HepG2 (cell line): ENCODE measurements at regions of chr2 and their contacts with region 1.

Region 1: GRCh38 chr2:23926750-23927571 is at the start of gene ATAD2B:
- DNase-seq: peak; percentile 90
- ATAC-seq: peak; percentile 90
- H3K4me3 ChIP-seq: peak within 1 kb of the TSS; percentile 90 to 98 (median 95)
- H3K27ac ChIP-seq: peak within 1 kb of the TSS; percentile 94
- H3K4me1 ChIP-seq: peaks cover 46% of the 10 kb centered on the region
- H3K27me3 ChIP-seq: no peaks in the 10 kb centered on the region; a peak in 1 of 5 replicates
- CTCF ChIP-seq: peak; percentile 95
- EP300 ChIP-seq: 0 out of 4 replicates have a peak, but pooled peaks of 1 of the 2 experiments have one; percentile 23
- POLR2A ChIP-seq: peak; percentile 96 to 97
- RAD21 ChIP-seq: peak; percentile 99
- total RNA-seq, gene ATAD2B: 22.2 and 22.4 TPM in 2 replicates

Region 2: DNA sequence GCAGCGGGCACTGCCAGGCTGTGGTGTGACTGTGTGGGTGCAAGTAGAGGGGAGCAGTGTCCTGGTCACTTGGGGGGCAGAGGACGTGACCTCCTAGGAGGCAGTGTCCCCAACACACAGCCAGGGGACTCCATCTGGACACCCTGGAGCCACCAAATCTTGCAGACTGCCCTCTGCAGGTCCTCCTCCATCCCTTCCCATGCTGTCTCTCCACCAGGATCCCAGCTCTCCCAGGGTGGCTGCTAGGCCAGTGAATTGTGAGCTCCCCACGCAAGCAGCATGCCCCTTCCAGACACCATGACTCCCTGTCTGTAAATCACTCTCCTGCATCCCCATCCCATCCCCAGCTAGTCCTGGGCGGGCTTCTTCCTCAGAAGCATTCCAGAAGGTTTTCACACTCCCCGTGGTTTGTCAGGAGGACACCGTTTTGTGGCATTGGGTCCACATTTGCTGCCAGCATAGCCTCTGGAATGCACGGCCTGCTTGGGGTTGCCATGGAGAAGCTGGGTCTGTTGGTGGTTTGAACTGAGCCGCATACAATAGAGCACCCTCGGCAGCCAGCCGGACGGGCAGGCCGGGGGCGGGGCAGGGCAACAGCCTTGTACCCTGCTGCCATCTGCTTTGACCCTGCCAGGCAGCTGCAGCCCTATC is 331.2 kb before region 1 on chr2:
- CTCF ChIA-PET with region 1: no interaction called
- POLR2A ChIA-PET with region 1: no interaction called
- in situ Hi-C with region 1: no loop called
- intact Hi-C with region 1: no loop called
- DNase-seq: peak; percentile 45
- ATAC-seq: peak; percentile 58
- H3K4me3 ChIP-seq: no peak overlapping the region
- H3K27ac ChIP-seq: no peak overlapping the region
- H3K4me1 ChIP-seq: no peaks in the 10 kb centered on the region
- H3K27me3 ChIP-seq: peaks cover 7 to 70% of the 10 kb centered on the region in 2 experiments; a peak in 4 of 5 replicates
- CTCF ChIP-seq: no peak
- EP300 ChIP-seq: no peak
- POLR2A ChIP-seq: no peak
- RAD21 ChIP-seq: no peak

Region 3: DNA sequence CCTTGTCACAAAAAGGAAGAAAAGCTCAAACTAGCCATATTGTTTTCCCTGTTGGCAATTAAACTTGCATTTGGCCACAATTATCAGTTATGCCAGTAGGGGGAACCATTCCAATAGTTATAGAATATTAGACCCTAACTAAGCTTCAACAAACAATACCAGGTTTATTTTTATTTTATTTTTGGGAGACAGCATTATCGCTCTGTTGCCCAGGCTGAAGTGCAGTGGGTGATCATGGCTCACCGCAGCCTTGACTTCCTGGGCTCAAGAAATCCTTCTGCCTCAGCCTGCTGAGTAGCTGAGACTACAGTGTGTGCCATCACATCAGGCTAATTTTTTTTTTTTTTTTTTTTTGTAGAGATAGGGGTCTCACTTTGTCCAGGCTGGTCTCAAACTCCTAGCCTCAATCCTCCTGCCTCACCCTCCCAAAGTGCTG is 102.2 kb before region 1 on chr2:
- CTCF ChIA-PET with region 1: no interaction called
- POLR2A ChIA-PET with region 1: interaction called, 12 read pairs
- in situ Hi-C with region 1: no loop called
- intact Hi-C with region 1: loop called (anchors 10 kb)
- DNase-seq: peak; percentile 51
- ATAC-seq: peak; percentile 78
- H3K4me3 ChIP-seq: no peak overlapping the region
- H3K27ac ChIP-seq: no peak overlapping the region
- H3K4me1 ChIP-seq: peaks cover 8% of the 10 kb centered on the region
- H3K27me3 ChIP-seq: no peaks in the 10 kb centered on the region
- CTCF ChIP-seq: peak; percentile 77
- EP300 ChIP-seq: no peak
- POLR2A ChIP-seq: no peak
- RAD21 ChIP-seq: peak; percentile 47; the same call in 1 of the 2 replicates

Region 4: GRCh38 chr2:23859983-23860382 is 67.0 kb before region 1 on chr2:
- CTCF ChIA-PET with region 1: no interaction called
- POLR2A ChIA-PET with region 1: no interaction called
- in situ Hi-C with region 1: no loop called
- intact Hi-C with region 1: no loop called
- DNase-seq: no peak
- ATAC-seq: no peak
- H3K4me3 ChIP-seq: no peak overlapping the region
- H3K27ac ChIP-seq: no peak overlapping the region
- H3K4me1 ChIP-seq: no peaks in the 10 kb centered on the region
- H3K27me3 ChIP-seq: no peaks in the 10 kb centered on the region
- CTCF ChIP-seq: no peak
- EP300 ChIP-seq: no peak
- POLR2A ChIP-seq: no peak
- RAD21 ChIP-seq: no peak

Region 5: GRCh38 chr2:23939987-23940717 is 13.2 kb after region 1 on chr2 and contains the start of gene UBXN2A:
- CTCF ChIA-PET with region 1: no interaction called
- POLR2A ChIA-PET with region 1: interaction called, 135 read pairs
- in situ Hi-C with region 1: no loop called
- intact Hi-C with region 1: loop called (anchors 1 kb)
- DNase-seq: peak; percentile 69
- ATAC-seq: peak; percentile 80
- H3K4me3 ChIP-seq: peak within 1 kb of the TSS; percentile 87 to 96 (median 93)
- H3K27ac ChIP-seq: peak within 1 kb of the TSS; percentile 87
- H3K4me1 ChIP-seq: peaks cover 46% of the 10 kb centered on the region
- H3K27me3 ChIP-seq: peaks cover 0 to 3% of the 10 kb centered on the region in 2 experiments; a peak in 1 of 5 replicates
- CTCF ChIP-seq: no peak
- EP300 ChIP-seq: no peak
- POLR2A ChIP-seq: peak; percentile 81 to 84
- RAD21 ChIP-seq: peak; percentile 76
- total RNA-seq, gene UBXN2A: 20.9 and 29.6 TPM in 2 replicates

Region 6: DNA sequence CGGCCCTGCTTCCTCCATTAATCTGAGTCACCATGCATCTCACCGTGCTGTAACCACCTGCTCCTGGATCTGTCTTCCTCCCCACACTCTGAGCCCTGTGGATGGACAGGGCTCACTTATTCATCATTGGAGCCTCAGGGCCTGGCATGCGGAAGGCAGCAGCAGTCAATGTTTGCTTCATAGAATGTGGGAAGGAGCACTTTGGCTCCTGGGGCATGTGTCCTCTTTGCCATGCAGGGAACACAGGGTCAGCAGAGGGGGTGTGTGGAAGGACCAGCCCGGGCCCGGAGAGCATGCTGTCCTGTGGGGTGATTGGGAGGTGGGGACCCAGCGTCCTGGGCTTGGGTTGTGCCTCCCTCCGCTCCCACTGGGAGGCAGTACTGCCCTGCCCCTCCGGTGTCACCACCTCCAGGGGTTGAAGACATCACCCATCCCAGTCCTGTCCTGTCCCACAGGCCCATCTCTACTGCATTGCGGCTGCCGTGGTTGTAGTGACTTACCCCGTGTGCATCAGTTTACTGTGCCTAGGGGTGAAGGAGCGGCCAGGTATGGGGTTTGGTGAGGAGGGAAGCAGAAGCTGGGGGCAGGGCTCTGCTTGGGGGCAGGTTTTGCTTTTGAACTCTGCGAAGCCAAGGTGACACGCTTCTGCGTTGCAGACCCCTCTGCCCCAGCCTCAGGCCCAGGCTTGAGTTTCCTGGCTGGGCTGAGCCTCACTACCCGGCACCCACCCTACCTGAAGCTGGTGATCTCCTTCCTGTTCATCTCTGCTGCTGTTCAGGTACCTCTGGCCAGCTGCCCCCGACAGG is 94.4 kb after region 1 on chr2:
- CTCF ChIA-PET with region 1: interaction called, 3 read pairs
- POLR2A ChIA-PET with region 1: interaction called, 62 read pairs
- in situ Hi-C with region 1: no loop called
- intact Hi-C with region 1: loop called (anchors 1 kb)
- DNase-seq: peak; percentile 61
- ATAC-seq: peak; percentile 84
- H3K4me3 ChIP-seq: no peak overlapping the region
- H3K27ac ChIP-seq: peak overlapping the region; percentile 41
- H3K4me1 ChIP-seq: peaks cover 43% of the 10 kb centered on the region
- H3K27me3 ChIP-seq: no peaks in the 10 kb centered on the region
- CTCF ChIP-seq: peak; percentile 95
- EP300 ChIP-seq: no peak
- POLR2A ChIP-seq: no peak
- RAD21 ChIP-seq: peak; percentile 97

Region 7: GRCh38 chr2:24058564-24059271 is 131.8 kb after region 1 on chr2:
- CTCF ChIA-PET with region 1: interaction called, 6 read pairs
- POLR2A ChIA-PET with region 1: interaction called, 11 read pairs
- in situ Hi-C with region 1: no loop called
- intact Hi-C with region 1: no loop called
- DNase-seq: no peak
- ATAC-seq: no peak
- H3K4me3 ChIP-seq: no peak overlapping the region
- H3K27ac ChIP-seq: no peak overlapping the region
- H3K4me1 ChIP-seq: peaks cover 7% of the 10 kb centered on the region
- H3K27me3 ChIP-seq: no peaks in the 10 kb centered on the region
- CTCF ChIP-seq: no peak
- EP300 ChIP-seq: no peak
- POLR2A ChIP-seq: no peak
- RAD21 ChIP-seq: no peak

Region 8: DNA sequence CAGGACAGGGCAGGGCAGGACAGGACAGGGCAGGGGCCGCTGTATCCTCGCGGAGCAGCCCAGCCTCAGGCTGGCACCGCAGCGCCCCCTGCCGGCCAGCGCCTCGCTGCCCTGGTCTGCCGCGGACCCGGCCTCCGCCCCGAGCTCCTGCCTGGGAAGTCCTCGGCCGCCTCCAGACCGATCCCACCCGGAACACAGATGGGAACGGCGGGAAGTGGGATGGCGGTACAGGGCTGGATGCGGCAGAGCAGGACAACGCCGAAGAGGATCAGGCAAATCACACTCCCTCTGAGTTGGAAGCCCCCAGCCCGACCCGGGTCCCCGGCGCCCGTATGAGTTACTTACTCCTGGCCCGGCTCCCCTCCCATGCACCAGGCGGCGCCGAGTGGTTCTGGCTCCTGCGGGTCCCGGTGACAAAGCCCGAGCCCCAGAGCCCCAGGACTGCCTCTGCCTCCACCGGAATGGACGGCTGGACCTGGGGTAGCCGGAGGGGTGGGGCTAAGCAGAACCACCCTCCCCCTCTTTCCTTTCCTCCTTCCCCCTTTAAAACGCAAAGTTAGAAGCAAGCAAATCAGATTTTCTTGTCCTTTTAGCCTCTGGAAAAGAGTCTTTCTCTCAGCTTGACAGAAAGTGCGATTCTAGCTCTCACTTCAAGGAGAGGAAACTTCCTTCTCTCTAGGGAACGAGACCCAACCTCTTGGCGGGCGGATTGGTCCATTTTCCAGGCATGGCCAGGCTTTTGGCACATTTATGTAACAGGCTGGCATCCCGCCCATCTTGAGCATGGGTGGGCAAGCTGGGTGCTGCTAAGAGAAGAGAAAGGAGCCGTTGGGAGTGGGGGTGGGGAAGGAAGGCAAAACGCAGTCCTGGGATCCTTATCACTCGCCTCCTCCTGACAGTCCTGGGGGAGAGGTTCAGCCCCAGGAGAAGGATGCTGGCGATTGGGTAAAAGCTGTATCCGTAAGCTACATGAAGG is 157.7 kb after region 1 on chr2 and contains the start of gene TP53I3:
- CTCF ChIA-PET with region 1: interaction called, 20 read pairs
- POLR2A ChIA-PET with region 1: interaction called, 99 read pairs
- in situ Hi-C with region 1: no loop called
- intact Hi-C with region 1: loop called (anchors 1 kb)
- DNase-seq: peak; percentile 87
- ATAC-seq: peak; percentile 92
- H3K4me3 ChIP-seq: peak within 1 kb of the TSS; percentile 67 to 84 (median 74)
- H3K27ac ChIP-seq: peak within 1 kb of the TSS; percentile 89
- H3K4me1 ChIP-seq: peaks cover 30% of the 10 kb centered on the region
- H3K27me3 ChIP-seq: no peaks in the 10 kb centered on the region; a peak in 1 of 5 replicates
- CTCF ChIP-seq: peak; percentile 94
- EP300 ChIP-seq: no peak; a peak in 1 of 4 replicates
- POLR2A ChIP-seq: peak; percentile 73 to 75
- RAD21 ChIP-seq: peak; percentile 98
- total RNA-seq, gene TP53I3: 44.1 and 48.2 TPM in 2 replicates